Transverse colon (tissue), 4 donors: ENCODE measurements at regions of chr10 and their contacts with region 1.

Region 1: GRCh38 chr10:38010119-38010903 is at the start of gene ZNF33A:
- DNase-seq: peak; percentile 95
- H3K4me3 ChIP-seq: peak within 1 kb of the TSS; percentile 69 to 87 (median 72)
- H3K27ac ChIP-seq: peak within 1 kb of the TSS; percentile 92 to 99 (median 98)
- H3K4me1 ChIP-seq: peaks cover 4 to 15% (median 10%) of the 10 kb centered on the region in 4 donors
- H3K27me3 ChIP-seq: no peaks in the 10 kb centered on the region
- CTCF ChIP-seq: peak in 3 of 5 experiments; percentile 9 to 26 (median 9)
- EP300 ChIP-seq: no peak
- POLR2A ChIP-seq: no peak
- total RNA-seq, gene ZNF33A: 17.3 to 51.1 (median 25.5) TPM

Region 2: GRCh38 chr10:36366843-36367242 is 1643.5 kb before region 1 on chr10:
- in situ Hi-C with region 1: no loop called
- intact Hi-C with region 1: no loop called
- DNase-seq: no peak
- H3K4me3 ChIP-seq: no peak overlapping the region
- H3K27ac ChIP-seq: no peak overlapping the region
- H3K4me1 ChIP-seq: no peaks in the 10 kb centered on the region
- H3K27me3 ChIP-seq: no peaks in the 10 kb centered on the region
- CTCF ChIP-seq: no peak
- EP300 ChIP-seq: no peak
- POLR2A ChIP-seq: no peak

Region 3: GRCh38 chr10:37937864-37938263 is 72.4 kb before region 1 on chr10:
- in situ Hi-C with region 1: no loop called
- intact Hi-C with region 1: no loop called
- DNase-seq: no peak
- H3K4me3 ChIP-seq: no peak overlapping the region
- H3K27ac ChIP-seq: no peak overlapping the region
- H3K4me1 ChIP-seq: no peaks in the 10 kb centered on the region
- H3K27me3 ChIP-seq: no peaks in the 10 kb centered on the region
- CTCF ChIP-seq: no peak
- EP300 ChIP-seq: no peak
- POLR2A ChIP-seq: no peak

Region 4: DNA sequence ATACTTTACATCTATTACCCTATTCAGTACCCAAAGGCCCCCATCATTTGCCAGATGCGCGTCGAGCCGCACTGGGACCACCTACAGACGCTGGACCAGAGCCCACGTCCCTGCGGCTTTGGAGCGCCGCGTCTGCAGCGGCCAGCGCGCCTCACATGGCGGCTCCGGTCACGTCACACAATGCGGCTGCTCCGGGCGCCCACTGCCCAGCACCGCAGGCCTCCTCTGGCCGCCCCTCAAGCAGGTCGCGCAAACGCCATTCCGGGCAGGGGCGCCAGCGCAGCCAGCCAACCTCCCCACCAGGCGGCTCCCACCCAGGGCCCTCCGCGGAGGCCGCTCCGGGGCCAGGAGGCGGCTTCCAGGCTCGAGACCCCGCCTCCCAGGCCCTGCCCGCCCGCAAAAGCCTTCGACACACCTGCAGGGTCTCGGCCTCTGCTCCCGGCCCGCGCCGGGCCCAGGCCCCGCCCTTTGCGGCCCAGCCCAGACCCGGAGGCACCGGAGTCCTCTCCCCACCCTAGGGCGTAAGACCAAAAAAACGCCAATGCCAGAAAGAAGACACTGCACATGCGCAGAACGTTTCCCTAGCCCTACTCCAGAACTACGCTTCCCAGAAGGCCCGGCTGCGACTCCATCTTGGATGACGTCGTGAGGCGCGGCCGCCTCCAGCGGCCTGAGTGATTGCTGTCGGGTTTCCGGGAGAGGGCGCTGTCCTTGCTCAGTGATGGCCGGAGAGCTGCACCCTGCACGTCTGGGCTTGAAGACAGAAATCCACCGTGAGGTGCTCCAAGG is 34.0 kb before region 1 on chr10 and contains the start of gene ZNF25:
- in situ Hi-C with region 1: no loop called
- intact Hi-C with region 1: loop called (anchors 2 kb)
- DNase-seq: peak; percentile 99
- H3K4me3 ChIP-seq: peak within 1 kb of the TSS; percentile 41 to 84 (median 78)
- H3K27ac ChIP-seq: peak within 1 kb of the TSS; percentile 93 to 98 (median 97)
- H3K4me1 ChIP-seq: peaks cover 0 to 17% (median 7%) of the 10 kb centered on the region in 4 donors
- H3K27me3 ChIP-seq: no peaks in the 10 kb centered on the region
- CTCF ChIP-seq: peak; percentile 69 to 96 (median 83)
- EP300 ChIP-seq: no peak
- POLR2A ChIP-seq: peak; percentile 86
- total RNA-seq, gene ZNF25: 0.80 to 8.4 (median 5.1) TPM

Region 5: DNA sequence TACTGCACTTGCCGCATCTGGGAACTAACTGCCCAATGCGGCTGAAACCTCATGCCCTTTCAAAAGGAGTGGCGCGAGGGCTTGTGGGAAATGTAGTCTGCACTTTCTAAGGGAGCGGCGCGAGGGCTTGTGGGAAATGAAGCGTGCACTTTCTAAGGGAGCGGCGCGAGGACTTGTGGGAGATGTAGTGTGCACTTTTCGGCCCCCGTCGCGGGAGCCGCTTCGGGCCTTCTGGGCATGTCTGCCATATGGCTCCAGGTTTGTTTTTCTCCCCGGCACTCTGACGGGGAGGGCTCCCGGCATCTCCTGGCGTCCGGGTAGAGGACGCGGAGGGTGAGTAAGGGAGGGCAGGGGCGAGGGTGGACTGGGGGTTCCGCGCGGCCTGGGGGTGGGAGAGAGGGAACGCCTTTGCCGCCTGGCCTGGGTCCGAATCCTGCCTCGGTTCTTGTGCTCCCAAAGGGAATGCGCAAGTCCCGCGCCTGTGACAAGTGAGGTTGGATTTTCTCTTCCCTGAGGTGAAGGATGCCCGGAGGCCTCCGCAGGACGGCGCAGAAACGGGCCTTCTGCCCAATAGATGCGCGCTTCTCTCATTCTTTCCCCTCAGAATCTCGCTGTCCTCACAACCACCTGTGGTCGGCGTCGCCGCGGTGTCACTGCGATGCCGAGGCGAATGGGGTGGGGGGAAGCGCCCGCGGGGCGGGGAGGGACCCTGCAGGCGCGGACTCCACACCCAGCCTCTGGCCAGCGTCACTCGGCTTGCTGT is 84.0 kb after region 1 on chr10 and contains the start of gene ZNF37A:
- in situ Hi-C with region 1: loop called in 1 of 4 experiments (anchors 10 kb)
- intact Hi-C with region 1: no loop called
- DNase-seq: peak; percentile 95
- H3K4me3 ChIP-seq: peak within 1 kb of the TSS; percentile 54 to 77 (median 60)
- H3K27ac ChIP-seq: peak within 1 kb of the TSS; percentile 84 to 89 (median 86)
- H3K4me1 ChIP-seq: peaks cover 0 to 14% (median 10%) of the 10 kb centered on the region in 4 donors
- H3K27me3 ChIP-seq: no peaks in the 10 kb centered on the region
- CTCF ChIP-seq: no peak
- EP300 ChIP-seq: no peak
- POLR2A ChIP-seq: peak; percentile 54
- total RNA-seq, gene ZNF37A: 10.4 to 17.9 (median 13.0) TPM